H1 (cell line): ENCODE measurements at regions of chr12 and their contacts with region 1.

Region 1: DNA sequence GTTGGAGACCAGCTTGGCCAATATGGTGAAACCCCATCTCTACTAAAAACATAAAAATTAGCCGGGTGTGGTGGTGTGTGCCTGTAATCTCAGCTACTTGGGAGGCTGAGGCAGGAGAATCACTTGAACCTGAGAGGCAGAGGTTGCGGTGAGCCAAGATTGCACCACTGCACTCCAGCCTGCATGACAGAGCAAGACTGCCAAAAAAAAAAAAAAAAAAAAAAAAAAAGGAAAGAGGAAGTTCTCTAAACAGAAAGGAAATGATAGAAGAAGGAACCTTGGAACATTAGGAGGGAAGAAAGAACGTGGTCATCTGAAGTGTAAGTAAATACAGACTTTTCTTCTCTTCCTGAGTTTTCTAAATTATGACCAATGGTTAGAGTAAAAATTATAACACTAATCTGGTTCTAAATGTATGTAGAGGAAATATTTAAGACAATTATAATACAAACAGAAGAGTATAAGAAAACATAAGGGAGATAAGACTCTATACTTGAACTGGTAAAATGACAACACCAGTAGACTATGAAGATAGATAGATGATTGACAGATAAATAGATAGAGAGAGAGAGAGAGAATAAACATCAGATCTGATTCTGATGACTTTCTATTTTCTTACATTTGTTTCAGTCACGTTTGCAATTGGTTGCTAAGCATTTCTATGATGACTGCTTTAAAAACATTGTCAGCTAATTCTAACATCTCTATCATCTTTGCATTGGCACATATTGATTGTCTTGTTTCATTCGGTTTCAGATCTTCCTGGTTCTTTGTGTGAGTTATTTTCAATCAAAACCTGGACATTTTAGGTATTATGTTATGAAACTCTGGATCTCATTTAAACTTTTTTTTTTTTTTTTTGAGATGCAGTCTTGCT is 12.9 kb upstream of the CORO1C start:
- DNase-seq: no peak
- H3K4me3 ChIP-seq: no peak overlapping the region
- H3K27ac ChIP-seq: no peak overlapping the region
- H3K4me1 ChIP-seq: no peaks in the 10 kb centered on the region
- H3K27me3 ChIP-seq: no peaks in the 10 kb centered on the region
- CTCF ChIP-seq: no peak
- EP300 ChIP-seq: no peak
- POLR2A ChIP-seq: no peak
- RAD21 ChIP-seq: no peak

Region 2: DNA sequence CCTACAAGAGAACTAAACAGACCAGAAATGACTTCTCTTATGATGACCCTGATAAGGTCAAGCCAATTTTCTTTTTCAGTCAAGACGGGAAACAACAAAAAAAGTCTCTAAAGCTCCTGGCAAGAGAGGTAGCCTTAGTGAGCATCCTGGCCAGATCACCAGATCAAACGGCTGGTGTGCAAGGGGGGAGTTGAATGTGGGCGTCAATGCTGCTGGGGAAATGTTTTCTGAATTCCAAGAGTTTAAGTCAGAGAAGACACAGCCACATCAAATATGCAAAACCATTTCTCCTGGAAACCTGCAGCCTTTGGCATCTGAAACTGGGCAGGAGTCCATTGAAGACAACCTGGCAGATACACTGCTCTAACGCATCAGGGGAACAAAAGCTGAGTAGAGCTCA is 94.6 kb before region 1 on chr12:
- CTCF ChIA-PET with region 1: no interaction called
- POLR2A ChIA-PET with region 1: no interaction called
- DNase-seq: no peak
- H3K4me3 ChIP-seq: no peak overlapping the region
- H3K27ac ChIP-seq: no peak overlapping the region
- H3K4me1 ChIP-seq: peaks cover 3 to 14% (median 8%) of the 10 kb centered on the region in 4 experiments; a peak in 6 of 7 replicates
- H3K27me3 ChIP-seq: no peaks in the 10 kb centered on the region
- CTCF ChIP-seq: no peak
- EP300 ChIP-seq: no peak
- POLR2A ChIP-seq: no peak
- RAD21 ChIP-seq: no peak

Region 3: GRCh38 chr12:108731105-108731865 is 13.0 kb before region 1 on chr12 and contains the start of gene CORO1C:
- CTCF ChIA-PET with region 1: interaction called, 10 read pairs
- POLR2A ChIA-PET with region 1: interaction called, 4 read pairs
- DNase-seq: peak; percentile 89 to 100
- H3K4me3 ChIP-seq: peak within 1 kb of the TSS; percentile 77 to 92 (median 84)
- H3K27ac ChIP-seq: peak within 1 kb of the TSS; percentile 76; the same call in 1 of the 2 replicates
- H3K4me1 ChIP-seq: peaks cover 0 to 6% (median 3%) of the 10 kb centered on the region in 4 experiments; a peak in 3 of 7 replicates
- H3K27me3 ChIP-seq: no peaks in the 10 kb centered on the region
- CTCF ChIP-seq: peak; percentile 62 to 92 (median 90)
- EP300 ChIP-seq: peak in 1 of 2 experiments; percentile 53; a peak in 1 of 3 replicates
- POLR2A ChIP-seq: peak; percentile 65 to 86
- RAD21 ChIP-seq: peak; percentile 48 to 58
- total RNA-seq, gene CORO1C: 120 and 130 TPM in 2 replicates